GM13977 (cell line): ENCODE measurements at regions of chr1 and their contacts with region 1.

Region 1: DNA sequence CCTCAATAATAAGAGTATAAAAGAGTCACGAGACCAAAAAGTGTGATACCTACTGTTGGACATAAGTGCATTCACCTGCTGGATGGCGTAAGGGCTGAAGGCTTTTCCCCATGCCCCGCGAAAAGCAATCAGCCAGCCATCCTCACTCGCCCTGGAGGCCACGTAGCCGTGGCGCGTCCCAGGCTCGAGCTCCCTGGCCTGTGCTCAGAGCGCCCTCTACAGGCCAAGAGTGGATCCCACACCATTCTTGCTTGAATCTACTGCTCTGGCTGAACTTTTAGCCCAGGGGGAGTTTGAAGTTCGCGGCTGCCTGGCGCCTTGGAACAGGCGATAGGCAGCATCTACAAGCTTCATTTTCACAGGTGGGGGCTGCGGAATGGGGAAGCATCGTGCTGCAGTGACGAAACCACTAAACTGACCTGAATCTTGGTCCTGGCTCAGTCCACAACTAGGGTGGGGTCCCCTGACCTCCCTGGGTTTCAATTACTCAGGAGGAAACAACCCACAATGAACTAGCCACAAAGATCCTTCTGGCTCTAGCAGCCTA is 70.3 kb upstream of the SERBP1 start:
- DNase-seq: peak; percentile 90
- CTCF ChIP-seq: peak; percentile 98

Region 2: DNA sequence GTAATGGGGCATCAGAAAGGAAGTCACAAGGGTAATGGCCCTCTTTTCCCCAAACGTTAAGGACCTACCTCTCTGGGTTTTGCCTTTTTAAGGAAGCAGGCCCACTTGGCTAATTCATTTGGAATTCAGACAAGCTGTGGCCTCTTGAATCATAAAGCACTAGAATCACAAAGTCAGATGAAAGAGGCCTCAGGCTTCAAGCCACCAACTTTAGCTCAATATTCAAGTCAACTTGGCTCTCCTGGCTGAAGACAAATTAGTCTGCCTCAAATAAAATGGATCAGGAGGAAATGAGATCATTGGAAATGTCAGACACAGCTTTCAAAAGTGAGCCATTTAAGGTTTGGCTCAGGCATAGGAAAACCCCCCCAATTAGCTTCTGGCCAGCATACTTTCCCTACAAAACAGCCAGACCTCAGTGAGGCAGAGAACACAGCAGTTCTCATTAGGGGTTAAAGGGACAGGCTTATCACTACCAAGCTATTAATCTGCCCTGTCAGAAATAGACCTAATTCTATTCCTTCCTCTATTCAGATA is 480.8 kb before region 1 on chr1:
- in situ Hi-C with region 1: loop called (anchors 25 kb)
- DNase-seq: no peak
- CTCF ChIP-seq: no peak

Region 3: DNA sequence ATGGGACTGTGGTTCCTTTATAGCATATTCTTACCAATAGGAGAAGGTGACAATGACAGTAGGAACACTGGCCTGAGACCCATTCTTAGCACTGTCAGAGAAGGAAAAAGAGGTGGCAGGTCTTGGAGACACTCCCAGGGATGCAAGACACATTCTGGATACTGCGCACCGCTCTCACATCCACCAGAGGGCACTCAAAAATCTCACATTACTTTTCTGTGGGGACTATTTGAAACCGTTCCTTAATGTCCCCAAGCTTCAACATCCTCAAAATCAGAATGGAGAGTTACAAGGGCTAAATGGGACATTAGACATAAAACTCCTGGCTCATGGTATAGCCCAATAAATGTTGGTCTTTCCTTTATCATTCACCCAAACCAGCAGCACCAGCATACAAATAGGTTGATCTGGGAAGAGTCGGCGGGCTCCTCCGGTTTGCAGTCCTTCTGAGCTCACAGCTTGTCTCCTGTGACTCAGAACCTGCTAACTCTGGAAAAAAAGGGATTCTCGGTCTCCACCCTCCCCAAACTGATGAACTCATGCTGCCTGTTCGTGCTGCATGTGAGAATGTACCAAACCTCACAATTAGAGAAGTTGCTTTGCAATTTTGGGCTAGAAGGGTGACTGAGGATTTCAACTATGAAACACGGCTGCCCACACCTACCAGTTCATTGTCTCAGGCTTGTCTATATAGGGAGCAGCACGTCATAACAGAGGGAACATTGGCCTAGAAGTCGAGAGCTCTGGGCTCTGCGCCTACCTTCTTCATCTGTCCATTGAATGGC is 152.6 kb before region 1 on chr1:
- in situ Hi-C with region 1: loop called (anchors 10 kb)
- DNase-seq: no peak
- CTCF ChIP-seq: peak; percentile 61

Region 4: DNA sequence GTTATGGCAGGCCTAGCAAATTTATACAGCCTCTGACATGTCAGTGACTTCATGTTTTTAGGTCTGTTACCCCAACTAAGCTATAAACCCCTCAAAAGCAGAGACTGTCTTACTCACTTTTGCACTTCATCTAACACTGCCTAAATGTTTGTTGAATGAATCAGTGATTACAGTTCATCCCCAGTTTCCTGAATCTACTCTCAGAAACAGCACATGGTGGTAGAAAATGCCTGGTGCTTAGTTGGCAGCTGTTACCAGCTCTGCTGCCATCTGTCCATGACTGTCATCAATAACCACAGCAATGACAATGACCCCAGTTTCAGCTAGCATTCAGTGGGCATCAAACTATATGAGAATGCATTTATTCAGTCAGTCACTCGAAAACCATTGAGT is 40.2 kb after region 1 on chr1:
- in situ Hi-C with region 1: no loop called
- DNase-seq: no peak
- CTCF ChIP-seq: no peak

Region 5: GRCh38 chr1:68321084-68321685 is 820.7 kb after region 1 on chr1:
- in situ Hi-C with region 1: no loop called
- DNase-seq: no peak
- CTCF ChIP-seq: no peak